Aorta (tissue), 5 donors: ENCODE measurements at regions of chr9 and their contacts with region 1.

Region 1: DNA sequence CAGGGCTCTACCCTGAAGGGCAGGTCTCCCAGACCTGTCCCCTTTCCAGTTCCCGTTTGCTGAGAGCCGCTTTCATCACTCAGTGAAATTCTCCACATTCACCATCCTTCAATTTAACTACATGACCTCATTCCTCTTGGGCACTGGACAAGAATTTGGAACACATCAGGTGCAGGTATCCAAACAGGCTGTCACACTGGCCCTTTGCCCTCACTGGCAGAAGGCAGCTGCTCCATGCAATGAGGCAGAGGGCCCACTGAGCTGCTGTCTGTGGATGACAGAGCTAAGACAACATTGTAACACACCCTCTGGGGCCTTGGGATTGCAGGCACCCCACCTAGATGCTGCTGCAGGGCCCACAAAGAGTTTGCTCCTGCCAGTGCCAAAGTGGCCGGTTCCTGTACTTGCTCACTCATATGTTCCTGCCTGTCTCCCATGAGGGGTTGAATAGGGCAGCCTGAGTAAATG is 55.1 kb downstream of the ACTL7B start:
- DNase-seq: no peak
- ATAC-seq: no peak
- H3K4me3 ChIP-seq: no peak overlapping the region
- H3K27ac ChIP-seq: no peak overlapping the region
- H3K4me1 ChIP-seq: no peaks in the 10 kb centered on the region
- H3K27me3 ChIP-seq: peaks cover 0 to 1% of the 10 kb centered on the region in 2 donors

Region 2: DNA sequence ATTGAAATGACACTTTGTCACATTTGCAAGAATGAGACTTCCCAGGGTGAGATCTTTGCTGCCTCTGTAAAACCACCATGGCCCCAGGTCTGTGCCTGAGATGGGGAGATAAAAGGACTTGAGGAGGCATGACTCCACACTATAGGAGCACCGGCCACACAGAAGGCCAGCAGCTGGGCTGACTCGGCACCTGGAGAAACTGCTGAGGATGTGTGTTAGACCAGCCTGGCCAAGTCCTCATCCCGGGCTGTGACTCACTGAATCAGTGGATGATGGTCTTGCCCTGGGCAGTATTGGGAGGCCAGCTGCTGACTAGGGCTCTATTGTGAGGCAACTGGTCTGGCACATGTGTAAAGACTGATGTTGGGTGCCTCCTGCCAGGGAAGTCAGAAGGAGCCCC is 231.1 kb before region 1 on chr9:
- intact Hi-C with region 1: no loop called
- DNase-seq: peak in 1 of 2 donors; percentile 44
- ATAC-seq: no peak
- H3K4me3 ChIP-seq: no peak overlapping the region
- H3K27ac ChIP-seq: no peak overlapping the region
- H3K4me1 ChIP-seq: no peaks in the 10 kb centered on the region
- H3K27me3 ChIP-seq: no peaks in the 10 kb centered on the region

Region 3: DNA sequence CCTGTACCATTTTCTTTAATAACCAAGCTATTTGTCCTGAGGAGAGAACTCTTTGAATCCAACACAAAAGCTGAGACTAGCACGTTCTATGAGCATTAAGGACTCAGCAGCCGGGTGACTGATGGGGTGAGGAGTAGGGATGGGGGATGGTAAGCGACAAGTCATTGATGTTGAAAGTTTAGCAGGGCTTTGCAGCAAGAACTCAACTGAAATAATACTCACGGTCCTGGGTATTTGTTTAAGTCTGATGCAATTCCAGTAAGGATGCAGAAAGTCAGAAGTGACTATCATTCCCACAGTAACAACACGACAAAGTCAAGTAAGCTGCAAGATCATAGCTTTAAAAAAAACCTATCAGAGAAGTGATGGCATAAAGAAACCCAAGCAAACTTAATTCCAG is 76.0 kb before region 1 on chr9:
- intact Hi-C with region 1: loop called in 1 of 2 experiments (anchors 2 kb)
- DNase-seq: no peak
- ATAC-seq: no peak
- H3K4me3 ChIP-seq: no peak overlapping the region
- H3K27ac ChIP-seq: no peak overlapping the region
- H3K4me1 ChIP-seq: peaks cover 0 to 3% of the 10 kb centered on the region in 2 donors
- H3K27me3 ChIP-seq: no peaks in the 10 kb centered on the region